Activated B cell treated with CpG ODN at 0.5 μM for 24 hours (primary cell): ENCODE measurements at regions of chr9 and their contacts with region 1.

Region 1: DNA sequence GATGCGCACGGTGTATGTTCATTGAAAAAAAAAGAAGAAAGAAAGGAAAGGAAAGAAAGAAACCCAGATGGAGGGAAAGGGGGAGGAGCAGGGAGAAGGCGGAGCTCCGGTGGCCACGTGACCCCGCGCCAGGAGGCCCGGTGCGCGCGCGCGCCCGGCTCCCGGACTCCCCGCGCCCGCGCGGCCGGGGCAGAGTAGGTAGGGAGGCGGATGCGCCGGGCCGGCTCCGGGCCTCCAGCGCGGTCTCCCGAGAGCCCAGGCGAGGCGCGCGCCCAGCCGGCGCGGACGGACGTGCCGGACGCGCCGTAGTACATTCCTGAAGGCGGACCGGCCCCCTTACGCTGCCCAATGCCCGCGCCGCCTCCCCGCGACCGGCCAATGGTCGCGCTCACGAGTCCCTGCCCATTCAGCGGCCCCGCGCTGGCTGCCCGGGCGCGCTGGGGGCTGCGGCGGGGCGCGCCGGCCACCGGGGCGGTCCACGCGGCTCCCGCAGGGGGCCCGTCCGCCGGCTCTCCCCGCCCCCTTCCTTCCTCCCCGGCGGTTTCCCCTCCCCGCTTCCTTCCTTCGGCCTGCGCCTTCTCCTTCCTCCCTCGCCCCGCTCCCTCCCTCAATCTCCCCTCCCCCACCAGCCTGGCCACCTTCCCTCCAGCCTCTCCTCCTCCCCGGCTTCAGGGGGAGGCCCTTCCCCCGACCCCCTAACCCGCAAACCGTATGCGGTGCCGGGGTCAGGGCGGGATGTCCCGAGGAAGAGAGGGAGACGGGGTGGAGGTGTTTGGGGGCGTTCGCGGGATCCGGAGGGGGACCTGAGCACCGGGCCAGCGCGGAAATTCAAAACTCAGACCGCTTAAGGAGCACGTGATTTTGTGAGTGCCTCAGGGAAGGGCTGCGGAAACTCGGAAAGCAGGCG is 5.8 kb downstream of the PTCH1 start:
- DNase-seq: peak; percentile 64
- ATAC-seq: peak; percentile 38
- H3K4me3 Mint-ChIP-seq: peak overlapping the region; percentile 92
- H3K27ac Mint-ChIP-seq: peak overlapping the region; percentile 70
- H3K4me1 Mint-ChIP-seq: peaks cover 47% of the 10 kb centered on the region
- H3K27me3 Mint-ChIP-seq: peaks cover 40% of the 10 kb centered on the region
- CTCF ChIP-seq: no peak

Region 2: GRCh38 chr9:95317119-95317892 is 193.7 kb before region 1 on chr9 and contains the start of gene FANCC:
- CTCF ChIA-PET with region 1: no interaction called
- POLR2A ChIA-PET with region 1: interaction called, 8 read pairs
- intact Hi-C with region 1: loop called (anchors 1 kb)
- DNase-seq: peak; percentile 89
- ATAC-seq: peak; percentile 84
- H3K4me3 Mint-ChIP-seq: peak within 1 kb of the TSS; percentile 92
- H3K27ac Mint-ChIP-seq: peak within 1 kb of the TSS; percentile 91
- H3K4me1 Mint-ChIP-seq: peaks cover 15% of the 10 kb centered on the region
- H3K27me3 Mint-ChIP-seq: peaks cover 10% of the 10 kb centered on the region
- CTCF ChIP-seq: no peak
- total RNA-seq, gene FANCC: 10.4 and 11.4 TPM in 2 replicates

Region 3: DNA sequence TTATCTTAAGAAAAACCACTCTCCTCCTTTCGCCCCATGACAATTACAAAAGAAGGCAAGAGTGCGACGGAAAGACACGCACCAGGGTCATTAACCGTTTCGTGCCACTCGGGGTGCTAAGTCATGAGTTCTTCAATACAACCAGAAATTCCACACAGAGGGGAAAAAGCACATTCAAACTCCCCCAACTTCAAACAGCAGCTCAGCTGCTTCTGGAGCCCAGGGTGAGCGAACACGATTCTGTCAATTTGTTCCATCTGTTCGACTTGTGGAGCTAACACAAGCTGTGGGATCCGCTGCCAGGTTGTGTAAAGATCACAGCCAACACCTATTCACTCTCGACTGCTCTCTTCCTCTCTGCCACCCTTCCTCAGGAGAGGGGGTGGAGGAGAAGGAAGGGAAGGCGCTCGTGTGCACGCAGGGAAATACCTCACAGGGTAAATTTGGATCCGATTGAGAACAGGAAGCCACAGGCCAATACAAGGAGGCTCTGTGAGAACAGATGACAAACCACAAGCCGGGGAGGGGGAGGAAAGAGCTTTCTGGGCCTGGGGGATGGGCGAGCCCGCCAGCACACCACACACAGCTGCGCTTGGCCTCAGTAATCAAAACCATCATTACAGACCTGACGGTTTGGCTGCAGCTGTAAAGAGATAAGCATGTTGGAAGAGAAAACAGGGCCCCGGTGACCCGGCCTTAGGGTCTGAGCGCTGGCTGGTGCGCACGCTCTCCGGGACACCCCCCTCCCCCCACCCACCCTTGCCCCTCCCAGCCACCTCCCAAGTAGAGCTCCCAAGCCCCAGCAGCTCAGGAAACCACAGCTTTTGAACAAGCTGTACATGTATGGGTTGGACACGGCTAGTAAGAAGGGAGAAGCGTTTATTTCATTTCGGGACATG is 48.5 kb before region 1 on chr9:
- CTCF ChIA-PET with region 1: interaction called, 3 read pairs
- POLR2A ChIA-PET with region 1: interaction called, 7 read pairs
- intact Hi-C with region 1: loop called (anchors 1 kb)
- DNase-seq: peak; percentile 47
- ATAC-seq: peak; percentile 95
- H3K4me3 Mint-ChIP-seq: peak overlapping the region; percentile 79
- H3K27ac Mint-ChIP-seq: peak overlapping the region; percentile 43
- H3K4me1 Mint-ChIP-seq: peaks cover 25% of the 10 kb centered on the region
- H3K27me3 Mint-ChIP-seq: peaks cover 33% of the 10 kb centered on the region
- CTCF ChIP-seq: no peak

Region 4: GRCh38 chr9:95494416-95495371 is 16.3 kb before region 1 on chr9:
- CTCF ChIA-PET with region 1: no interaction called
- POLR2A ChIA-PET with region 1: interaction called, 7 read pairs
- intact Hi-C with region 1: loop called (anchors 1 kb)
- DNase-seq: peak; percentile 46
- ATAC-seq: peak; percentile 90
- H3K4me3 Mint-ChIP-seq: peak overlapping the region; percentile 76
- H3K27ac Mint-ChIP-seq: peak overlapping the region; percentile 85
- H3K4me1 Mint-ChIP-seq: peaks cover 19% of the 10 kb centered on the region
- H3K27me3 Mint-ChIP-seq: peaks cover 8% of the 10 kb centered on the region
- CTCF ChIP-seq: no peak

Region 5: GRCh38 chr9:95852059-95853032 is 341.4 kb after region 1 on chr9:
- CTCF ChIA-PET with region 1: no interaction called
- POLR2A ChIA-PET with region 1: interaction called, 7 read pairs
- intact Hi-C with region 1: loop called (anchors 2 kb)
- DNase-seq: no peak
- ATAC-seq: peak; percentile 79
- H3K4me3 Mint-ChIP-seq: peak overlapping the region; percentile 29
- H3K27ac Mint-ChIP-seq: peak overlapping the region; percentile 67
- H3K4me1 Mint-ChIP-seq: peaks cover 26% of the 10 kb centered on the region
- H3K27me3 Mint-ChIP-seq: no peaks in the 10 kb centered on the region
- CTCF ChIP-seq: no peak

Region 6: DNA sequence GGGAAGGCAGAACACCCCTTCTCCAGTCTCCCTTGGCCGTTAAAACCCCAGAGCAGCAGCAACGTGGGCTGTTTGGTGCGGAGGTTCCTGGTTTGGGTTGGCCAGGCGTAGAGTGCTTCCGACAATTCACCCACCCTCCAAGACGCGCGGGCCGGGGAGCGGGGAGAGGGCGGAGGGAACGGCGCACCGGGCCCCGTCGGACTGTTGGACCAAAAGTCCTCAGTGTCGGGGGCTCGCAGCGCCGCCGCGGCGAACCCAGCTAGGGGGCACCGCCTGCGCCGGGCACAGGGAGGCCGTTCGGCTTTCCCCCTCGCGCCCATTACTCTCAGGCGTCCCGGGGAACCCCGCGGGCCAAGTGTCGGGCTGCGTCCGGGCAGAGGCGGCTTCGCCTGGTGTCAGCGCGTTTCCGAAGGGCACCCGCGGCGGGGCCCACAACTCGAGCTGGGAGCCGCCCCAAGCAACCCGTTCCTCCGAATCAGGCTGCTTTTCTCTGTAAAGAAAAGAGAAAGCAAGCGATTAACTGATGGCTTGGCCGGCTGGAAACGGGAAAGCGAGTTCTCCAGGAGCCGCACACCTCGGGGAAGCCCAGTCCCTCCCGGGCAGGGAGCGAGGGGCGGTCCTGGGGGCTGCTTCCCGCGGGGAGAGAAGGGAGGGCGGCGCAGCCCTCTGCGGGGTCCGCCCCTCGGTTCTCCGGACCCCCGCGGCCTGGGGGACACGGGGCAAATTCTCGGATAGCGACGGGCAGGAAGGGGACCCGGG is 510.0 kb after region 1 on chr9:
- CTCF ChIA-PET with region 1: no interaction called
- POLR2A ChIA-PET with region 1: no interaction called
- intact Hi-C with region 1: loop called (anchors 10 kb)
- DNase-seq: no peak
- ATAC-seq: no peak
- H3K4me3 Mint-ChIP-seq: peak overlapping the region; percentile 71
- H3K27ac Mint-ChIP-seq: no peak overlapping the region
- H3K4me1 Mint-ChIP-seq: peaks cover 21% of the 10 kb centered on the region
- H3K27me3 Mint-ChIP-seq: peaks cover 50% of the 10 kb centered on the region
- CTCF ChIP-seq: no peak

Region 7: GRCh38 chr9:96566498-96567207 is 1055.7 kb after region 1 on chr9:
- CTCF ChIA-PET with region 1: no interaction called
- POLR2A ChIA-PET with region 1: no interaction called
- intact Hi-C with region 1: loop called (anchors 10 kb)
- DNase-seq: peak; percentile 71
- ATAC-seq: peak; percentile 89
- H3K4me3 Mint-ChIP-seq: peak overlapping the region; percentile 86
- H3K27ac Mint-ChIP-seq: peak overlapping the region; percentile 81
- H3K4me1 Mint-ChIP-seq: peaks cover 17% of the 10 kb centered on the region
- H3K27me3 Mint-ChIP-seq: peaks cover 3% of the 10 kb centered on the region
- CTCF ChIP-seq: no peak